Activated T-helper 2 cell treated with anti-CD3 and anti-CD28 coated beads, Interferon-gamma antibody, Interleukin-2, Interleukin-4, amounts not matched to agents 10 μg/mL and 5 μg/mL and 100 μg/mL, durations not matched to agents 14 hours and 24 hours and 36 hours (primary cell): ENCODE measurements at regions of chr10 and their contacts with region 1.

Region 1: DNA sequence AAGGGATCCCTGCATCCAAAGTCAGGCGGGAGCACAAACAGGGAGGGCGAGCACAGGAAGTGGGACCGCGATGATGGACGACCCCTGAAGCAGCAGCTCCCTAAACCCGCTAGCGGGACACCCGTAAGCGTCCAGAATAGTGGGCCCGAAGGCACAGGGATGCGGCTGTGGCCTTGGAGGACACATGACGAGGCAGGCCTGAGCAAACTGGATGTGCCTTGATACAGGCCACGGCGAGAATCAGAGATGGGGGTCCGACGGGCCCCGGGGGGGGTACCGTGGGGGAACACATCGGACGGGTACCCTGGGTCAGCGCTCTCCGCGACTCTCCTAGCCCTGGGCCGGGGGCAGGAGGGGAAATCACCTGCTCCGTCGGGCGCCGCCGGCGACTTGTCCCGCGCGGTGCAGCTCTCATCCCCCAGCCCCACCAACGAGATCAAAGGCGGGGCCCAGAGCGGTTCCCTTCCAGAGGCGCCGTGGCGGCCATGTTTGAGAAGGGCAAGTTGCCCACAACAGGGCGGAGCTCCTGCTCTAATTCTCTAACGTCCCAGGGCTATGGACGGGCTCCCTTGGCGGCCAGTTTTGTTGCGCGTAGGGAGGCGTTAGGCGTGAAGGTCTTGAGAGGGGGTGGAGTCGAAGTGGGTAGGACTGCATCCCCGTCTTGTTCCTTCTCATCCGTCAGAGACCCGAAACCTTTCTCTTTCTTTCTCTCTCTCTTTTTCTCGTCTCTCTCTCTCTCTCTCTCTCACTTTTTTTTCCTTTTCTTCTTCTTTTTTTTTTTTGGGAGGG is at the start of gene CUEDC2:
- DNase-seq: peak; percentile 96
- H3K4me3 Mint-ChIP-seq: peak within 1 kb of the TSS; percentile 92
- H3K27ac Mint-ChIP-seq: peak within 1 kb of the TSS; percentile 93
- H3K4me1 Mint-ChIP-seq: peaks cover 41% of the 10 kb centered on the region
- H3K27me3 Mint-ChIP-seq: no peaks in the 10 kb centered on the region
- total RNA-seq, gene CUEDC2: 60.7 and 67.5 TPM in 2 replicates

Region 2: DNA sequence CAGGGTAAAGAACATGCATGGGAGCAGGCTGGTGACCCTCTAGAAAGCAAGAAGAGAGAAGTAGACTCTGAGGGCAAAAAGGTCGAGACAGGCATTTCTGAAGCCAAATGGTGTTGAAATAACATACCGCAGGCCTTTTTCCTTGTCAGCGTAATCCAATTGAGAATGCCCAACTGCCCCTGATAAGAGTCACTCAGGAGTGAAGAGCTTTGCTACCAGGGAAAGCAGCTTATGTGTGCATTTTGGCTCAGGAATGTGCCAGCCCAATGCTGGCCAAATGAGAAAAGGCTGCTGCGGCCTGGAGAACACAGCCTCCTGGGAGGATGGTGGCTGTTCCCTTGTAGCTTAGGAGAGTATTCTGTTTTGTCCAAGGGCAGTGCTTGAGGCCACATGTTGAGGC is 98.3 kb before region 1 on chr10:
- intact Hi-C with region 1: no loop called
- DNase-seq: no peak
- H3K4me3 Mint-ChIP-seq: no peak overlapping the region
- H3K27ac Mint-ChIP-seq: no peak overlapping the region
- H3K4me1 Mint-ChIP-seq: peaks cover 1% of the 10 kb centered on the region
- H3K27me3 Mint-ChIP-seq: no peaks in the 10 kb centered on the region

Region 3: DNA sequence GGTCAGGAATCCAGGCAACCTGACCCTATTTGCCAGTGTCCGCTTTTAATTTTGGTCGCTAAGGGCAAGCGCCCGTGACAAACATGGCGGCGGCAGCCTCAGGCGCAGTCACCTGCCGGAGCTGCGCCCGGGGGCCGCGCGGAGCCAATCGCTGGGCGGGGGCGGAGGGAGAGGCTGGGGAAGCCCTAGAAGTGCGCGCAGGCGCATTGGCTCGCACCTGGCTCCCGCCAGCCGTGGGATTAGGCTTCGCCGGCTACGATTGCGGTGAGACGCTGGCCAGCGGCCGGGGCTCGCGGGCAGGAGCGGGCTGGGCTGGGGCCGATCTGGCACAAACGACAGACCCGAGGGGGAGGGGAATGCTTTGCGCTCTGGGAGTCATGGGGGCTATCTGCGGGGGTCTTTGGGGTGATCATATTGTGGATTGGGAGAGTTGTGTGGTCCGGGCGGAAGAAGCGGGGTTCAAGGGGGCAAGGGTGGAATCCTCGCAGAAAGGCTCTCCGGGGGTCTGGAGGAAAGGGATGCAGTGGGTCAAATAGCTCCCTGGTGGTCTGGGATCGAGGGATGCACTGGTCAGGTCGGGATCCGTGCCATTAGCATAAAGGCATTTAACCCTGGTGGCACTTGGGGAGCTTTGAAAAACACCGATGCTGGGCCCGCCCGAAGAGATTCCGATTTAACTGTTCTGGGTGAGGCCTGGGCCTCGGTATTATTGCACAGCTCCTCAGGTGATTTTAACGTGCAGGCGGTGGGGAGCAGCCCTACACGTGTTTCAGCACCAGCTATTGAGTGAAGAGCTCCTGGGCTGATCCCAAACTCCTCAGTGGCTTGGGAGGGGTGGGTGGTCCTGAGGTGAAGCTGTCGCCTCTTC is 29.1 kb after region 1 on chr10:
- intact Hi-C with region 1: loop called (anchors 1 kb)
- DNase-seq: peak; percentile 88
- H3K4me3 Mint-ChIP-seq: peak overlapping the region; percentile 90
- H3K27ac Mint-ChIP-seq: peak overlapping the region; percentile 85
- H3K4me1 Mint-ChIP-seq: peaks cover 24% of the 10 kb centered on the region
- H3K27me3 Mint-ChIP-seq: no peaks in the 10 kb centered on the region